ENCODE measurements at regions of chr7 and their contacts with region 1.

Region 1: GRCh38 chr7:99558306-99559174 is at the start of gene ZNF655:
- DNase-seq: peak; percentile 96
- ATAC-seq: peak; percentile 88
- H3K4me3 Mint-ChIP-seq: peak within 1 kb of the TSS; percentile 100
- H3K27ac Mint-ChIP-seq: peak within 1 kb of the TSS; percentile 100
- H3K4me1 Mint-ChIP-seq: peaks cover 48% of the 10 kb centered on the region
- H3K27me3 Mint-ChIP-seq: no peaks in the 10 kb centered on the region
- total RNA-seq, gene ZNF655: 101 to 108 TPM

Region 2: GRCh38 chr7:99408379-99409191 is 150.0 kb before region 1 on chr7 and contains the starts of genes BUD31 and PDAP1:
- CTCF ChIA-PET with region 1: no interaction called
- POLR2A ChIA-PET with region 1: interaction called, 23 read pairs
- DNase-seq: peak; percentile 95
- ATAC-seq: peak; percentile 84
- H3K4me3 Mint-ChIP-seq: peak within 1 kb of the TSS; percentile 98
- H3K27ac Mint-ChIP-seq: peak within 1 kb of the TSS; percentile 99
- H3K4me1 Mint-ChIP-seq: peaks cover 49% of the 10 kb centered on the region
- H3K27me3 Mint-ChIP-seq: no peaks in the 10 kb centered on the region
- total RNA-seq, gene BUD31: 101 to 110 TPM
- total RNA-seq, gene PDAP1: 104 TPM

Region 3: GRCh38 chr7:99504603-99505323 is 53.8 kb before region 1 on chr7 and contains the start of gene ZKSCAN5:
- CTCF ChIA-PET with region 1: interaction called, 4 read pairs
- POLR2A ChIA-PET with region 1: interaction called, 57 read pairs
- DNase-seq: peak; percentile 98
- ATAC-seq: peak; percentile 84
- H3K4me3 Mint-ChIP-seq: peak within 1 kb of the TSS; percentile 85
- H3K27ac Mint-ChIP-seq: peak within 1 kb of the TSS; percentile 95
- H3K4me1 Mint-ChIP-seq: peaks cover 32% of the 10 kb centered on the region
- H3K27me3 Mint-ChIP-seq: no peaks in the 10 kb centered on the region
- total RNA-seq, gene ZKSCAN5: 13.9 TPM

Region 4: GRCh38 chr7:99541212-99541611 is 17.3 kb before region 1 on chr7:
- CTCF ChIA-PET with region 1: no interaction called
- POLR2A ChIA-PET with region 1: no interaction called
- DNase-seq: no peak
- ATAC-seq: no peak
- H3K4me3 Mint-ChIP-seq: no peak overlapping the region
- H3K27ac Mint-ChIP-seq: no peak overlapping the region
- H3K4me1 Mint-ChIP-seq: no peaks in the 10 kb centered on the region
- H3K27me3 Mint-ChIP-seq: no peaks in the 10 kb centered on the region

Region 5: GRCh38 chr7:99571768-99572167 is 13.2 kb after region 1 on chr7:
- CTCF ChIA-PET with region 1: no interaction called
- POLR2A ChIA-PET with region 1: interaction called, 25 read pairs
- DNase-seq: no peak
- ATAC-seq: no peak
- H3K4me3 Mint-ChIP-seq: no peak overlapping the region
- H3K27ac Mint-ChIP-seq: no peak overlapping the region
- H3K4me1 Mint-ChIP-seq: no peaks in the 10 kb centered on the region
- H3K27me3 Mint-ChIP-seq: no peaks in the 10 kb centered on the region

Region 6: DNA sequence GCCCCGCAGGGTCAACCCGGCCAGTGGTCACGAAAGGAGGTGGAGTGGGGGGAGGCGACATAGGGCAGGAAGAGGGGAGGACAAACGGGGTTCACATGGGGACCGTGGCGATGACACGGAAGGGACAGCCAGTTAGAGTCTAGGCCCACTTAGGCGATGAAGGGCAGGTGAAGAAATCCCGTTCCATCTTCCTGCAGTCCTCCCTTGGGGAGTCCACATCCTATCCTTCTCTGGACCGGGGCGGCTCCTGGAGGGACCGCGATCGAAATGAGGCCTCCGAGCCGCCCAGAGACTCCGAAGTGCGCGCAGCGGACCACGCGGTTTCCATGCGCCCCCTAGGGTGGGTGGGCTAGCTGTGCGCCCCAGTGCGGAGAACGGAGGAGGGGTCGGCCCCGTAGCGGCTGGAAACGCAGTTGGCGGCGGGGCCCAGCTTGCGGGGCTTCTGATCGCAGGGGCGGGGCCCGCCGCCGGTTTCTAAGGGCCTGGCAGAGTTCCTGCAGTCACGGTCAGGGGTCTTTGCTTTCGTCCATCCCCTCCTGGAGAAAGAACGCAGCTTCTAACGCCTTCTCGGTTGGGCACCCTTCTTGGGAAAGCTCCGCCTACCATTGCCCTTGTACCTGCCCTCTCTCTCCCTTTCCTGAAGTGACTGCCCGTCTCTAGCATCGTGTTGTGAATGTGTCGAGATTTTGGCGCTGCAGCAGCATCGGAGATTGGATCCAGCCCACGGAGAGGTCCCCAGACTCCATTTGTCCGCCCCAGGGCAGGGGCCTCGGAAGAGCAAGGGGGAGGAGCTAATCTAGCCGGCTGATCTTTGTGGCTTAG is 21.6 kb after region 1 on chr7:
- CTCF ChIA-PET with region 1: no interaction called
- POLR2A ChIA-PET with region 1: interaction called, 22 read pairs
- DNase-seq: peak; percentile 45
- ATAC-seq: peak; percentile 77
- H3K4me3 Mint-ChIP-seq: peak overlapping the region; percentile 76
- H3K27ac Mint-ChIP-seq: peak overlapping the region; percentile 44
- H3K4me1 Mint-ChIP-seq: peaks cover 20% of the 10 kb centered on the region
- H3K27me3 Mint-ChIP-seq: no peaks in the 10 kb centered on the region

Region 7: GRCh38 chr7:99616359-99617191 is 58.0 kb after region 1 on chr7 and contains the start of gene ZSCAN25:
- CTCF ChIA-PET with region 1: interaction called, 12 read pairs
- POLR2A ChIA-PET with region 1: interaction called, 45 read pairs
- DNase-seq: peak; percentile 91
- ATAC-seq: peak; percentile 92
- H3K4me3 Mint-ChIP-seq: peak within 1 kb of the TSS; percentile 95
- H3K27ac Mint-ChIP-seq: peak within 1 kb of the TSS; percentile 97
- H3K4me1 Mint-ChIP-seq: peaks cover 61% of the 10 kb centered on the region
- H3K27me3 Mint-ChIP-seq: no peaks in the 10 kb centered on the region
- total RNA-seq, gene ZSCAN25: 34.8 to 36.3 TPM

Region 8: DNA sequence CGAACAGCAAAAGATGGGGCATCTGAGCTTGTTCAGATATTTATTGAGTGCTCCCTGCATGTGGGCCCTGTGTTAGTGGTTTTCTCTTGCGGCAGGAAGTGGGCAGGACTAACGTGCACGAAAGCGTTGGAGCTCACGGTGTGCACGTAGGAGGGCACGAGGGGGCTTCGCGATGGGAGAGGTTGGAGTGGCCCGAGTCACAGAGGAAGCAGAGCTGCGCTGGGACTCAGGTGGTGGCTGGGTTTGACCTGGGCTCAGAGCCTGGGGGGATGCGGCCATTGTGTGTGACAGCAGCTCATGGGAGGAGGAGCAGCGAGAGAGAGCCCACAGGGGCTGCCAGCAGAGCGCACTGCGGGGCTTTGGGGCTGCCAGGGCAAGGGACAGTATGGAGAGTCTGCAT is 65.9 kb after region 1 on chr7:
- CTCF ChIA-PET with region 1: interaction called, 3 read pairs
- POLR2A ChIA-PET with region 1: interaction called, 35 read pairs
- DNase-seq: peak; percentile 94
- ATAC-seq: peak; percentile 90
- H3K4me3 Mint-ChIP-seq: peak overlapping the region; percentile 83
- H3K27ac Mint-ChIP-seq: peak overlapping the region; percentile 99
- H3K4me1 Mint-ChIP-seq: peaks cover 63% of the 10 kb centered on the region
- H3K27me3 Mint-ChIP-seq: no peaks in the 10 kb centered on the region